PC-3 (cell line): ENCODE measurements at regions of chr17 and their contacts with region 1.

Region 1: DNA sequence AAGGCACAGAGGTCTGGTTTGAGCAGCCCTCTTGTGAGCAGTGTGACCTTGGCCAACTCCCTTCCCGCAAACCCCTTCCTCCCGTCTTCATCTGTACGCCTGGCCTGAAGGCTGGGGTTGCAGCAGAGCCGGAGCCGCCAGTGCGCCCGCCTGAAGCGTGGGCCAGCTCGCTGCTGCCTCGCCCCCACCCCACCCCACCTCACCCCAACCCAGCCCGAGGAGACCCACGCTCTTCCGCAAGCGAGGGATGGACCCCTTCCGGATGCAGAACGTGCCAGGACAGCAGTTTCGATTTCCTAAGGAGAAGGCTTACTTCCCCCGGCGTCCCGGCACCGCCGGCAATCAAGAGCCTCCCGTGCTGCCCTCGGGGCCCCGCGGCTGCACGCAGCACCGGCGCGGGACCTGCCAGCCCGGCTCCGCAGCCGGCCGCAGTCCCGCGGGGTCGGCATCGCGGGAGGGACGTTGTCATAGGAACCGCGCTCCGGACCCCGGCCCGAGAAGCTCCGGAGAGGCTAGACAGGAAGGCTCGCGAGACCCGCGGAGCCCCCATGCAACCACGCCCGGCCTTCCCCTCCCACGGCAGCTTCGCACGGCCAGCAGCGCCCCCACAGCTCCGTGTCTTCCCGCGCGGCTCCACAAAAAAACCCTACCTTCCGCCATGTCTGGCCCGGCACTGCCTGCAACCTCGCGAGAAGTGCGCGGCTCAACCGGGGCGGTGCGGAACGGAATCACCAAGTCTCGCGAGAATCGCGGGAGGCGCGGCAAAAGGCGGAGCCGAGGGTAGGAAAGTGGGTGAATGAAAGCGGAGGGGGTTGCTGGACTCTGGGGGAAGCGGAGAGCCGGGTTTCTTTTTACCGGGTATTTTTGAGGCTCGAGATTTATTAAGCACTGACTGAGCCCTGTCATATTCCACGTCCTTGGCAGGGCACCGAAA is at the start of gene ANKFY1:
- DNase-seq: peak; percentile 88
- ATAC-seq: peak; percentile 98
- H3K4me3 ChIP-seq: peak within 1 kb of the TSS; percentile 86
- H3K27ac ChIP-seq: no peak within 1 kb of the TSS
- H3K4me1 ChIP-seq: peaks cover 9% of the 10 kb centered on the region
- H3K27me3 ChIP-seq: no peaks in the 10 kb centered on the region
- CTCF ChIP-seq: no peak
- total RNA-seq, gene ANKFY1: 18.5 and 29.4 TPM in 2 replicates

Region 2: GRCh38 chr17:4100883-4101756 is 162.4 kb before region 1 on chr17:
- CTCF ChIA-PET with region 1: no interaction called
- POLR2A ChIA-PET with region 1: no interaction called
- intact Hi-C with region 1: no loop called
- DNase-seq: no peak
- ATAC-seq: no peak
- H3K4me3 ChIP-seq: no peak overlapping the region
- H3K27ac ChIP-seq: no peak overlapping the region
- H3K4me1 ChIP-seq: no peaks in the 10 kb centered on the region
- H3K27me3 ChIP-seq: no peaks in the 10 kb centered on the region
- CTCF ChIP-seq: no peak

Region 3: DNA sequence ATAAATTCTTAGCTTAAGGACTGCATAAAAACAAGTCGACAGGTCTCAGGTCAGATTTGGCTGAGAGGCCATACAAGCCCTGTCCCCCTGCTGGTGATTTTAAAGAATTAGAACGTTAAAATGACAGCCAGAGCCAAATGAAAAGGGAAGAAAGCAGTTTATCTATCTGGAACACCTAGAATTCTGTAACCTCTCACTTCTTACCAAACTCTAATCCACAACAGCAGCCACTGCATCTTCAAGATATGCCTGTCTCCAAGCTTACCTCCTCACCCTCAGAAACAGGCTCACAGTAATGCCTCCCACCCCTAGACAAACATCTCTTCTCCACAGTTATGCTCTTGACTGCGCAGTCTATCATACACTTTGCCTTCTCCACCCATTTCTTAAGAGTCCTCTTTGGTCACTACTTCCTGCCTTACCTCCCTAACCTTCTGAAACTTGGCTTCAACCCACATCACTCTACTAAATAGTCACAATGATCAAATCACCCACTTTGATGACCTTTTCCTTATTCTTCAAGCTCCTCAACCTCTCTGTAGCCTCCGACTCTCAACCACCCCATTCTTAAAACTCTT is 14.0 kb before region 1 on chr17:
- CTCF ChIA-PET with region 1: interaction called, 13 read pairs
- POLR2A ChIA-PET with region 1: interaction called, 3 read pairs
- intact Hi-C with region 1: no loop called
- DNase-seq: peak; percentile 43
- ATAC-seq: peak; percentile 42
- H3K4me3 ChIP-seq: no peak overlapping the region
- H3K27ac ChIP-seq: no peak overlapping the region
- H3K4me1 ChIP-seq: peaks cover 21% of the 10 kb centered on the region
- H3K27me3 ChIP-seq: no peaks in the 10 kb centered on the region
- CTCF ChIP-seq: peak; percentile 45; the same call in 1 of the 2 replicates

Region 4: DNA sequence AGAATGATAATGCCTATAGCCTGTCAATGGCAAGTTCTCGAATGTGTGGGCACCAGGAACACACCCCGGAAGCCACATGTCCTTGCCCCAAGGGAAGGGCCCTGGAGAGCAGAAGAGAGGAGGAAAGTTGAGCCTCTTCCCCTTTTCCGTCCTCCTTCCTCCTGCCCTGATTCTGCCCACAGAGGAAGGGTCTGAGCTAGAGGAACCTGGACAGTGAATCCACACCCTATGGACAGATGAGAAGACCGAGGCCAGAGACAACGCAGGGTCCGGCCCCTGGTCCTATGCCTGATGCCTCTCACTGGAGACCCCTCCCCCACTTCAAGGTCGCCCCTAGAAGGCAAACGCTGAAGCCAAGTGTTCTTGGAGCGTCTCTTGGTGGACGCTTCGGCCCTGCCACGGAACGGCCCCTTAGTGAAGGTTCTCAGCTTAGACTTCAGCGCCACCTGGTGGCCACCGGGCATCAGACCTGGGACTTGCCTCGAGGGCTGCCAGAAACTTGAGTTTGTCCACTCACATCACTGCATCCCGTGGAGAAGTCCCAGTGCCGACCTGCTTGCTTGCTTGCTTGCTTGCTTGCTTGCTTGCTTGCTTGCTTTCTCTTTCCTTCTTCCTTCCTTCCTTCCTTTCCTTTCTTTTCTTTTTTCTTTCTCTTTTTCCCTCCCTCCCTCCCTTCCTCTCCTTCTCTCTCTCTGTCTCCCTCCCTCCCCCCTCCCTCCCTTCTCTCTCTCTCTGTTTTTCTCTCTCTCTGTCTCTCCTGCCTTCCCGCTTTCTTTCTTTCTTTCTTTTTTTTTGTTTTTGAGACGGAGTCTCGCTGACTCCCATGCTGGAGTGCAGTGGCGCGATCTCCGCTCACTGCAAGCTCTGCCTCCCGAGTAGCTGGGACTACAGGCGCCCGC is 149.6 kb after region 1 on chr17:
- CTCF ChIA-PET with region 1: no interaction called
- POLR2A ChIA-PET with region 1: interaction called, 7 read pairs
- intact Hi-C with region 1: loop called (anchors 5 kb)
- DNase-seq: peak; percentile 85
- ATAC-seq: peak; percentile 98
- H3K4me3 ChIP-seq: peak overlapping the region; percentile 38; the same call in 1 of the 2 replicates
- H3K27ac ChIP-seq: no peak overlapping the region
- H3K4me1 ChIP-seq: no peaks in the 10 kb centered on the region; the same call in 1 of the 2 replicates
- H3K27me3 ChIP-seq: no peaks in the 10 kb centered on the region
- CTCF ChIP-seq: peak; percentile 77